Activated CD8-positive, alpha-beta T cell treated with anti-CD3 and anti-CD28 coated beads for 36 hours (primary cell): ENCODE measurements at regions of chr20 and their contacts with region 1.

Region 1: GRCh38 chr20:57709931-57710799 is at the start of gene PMEPA1:
- DNase-seq: peak; percentile 93
- ATAC-seq: peak; percentile 94
- H3K4me3 Mint-ChIP-seq: peak within 1 kb of the TSS; percentile 80
- H3K27ac Mint-ChIP-seq: peak within 1 kb of the TSS; percentile 78
- H3K4me1 Mint-ChIP-seq: peaks cover 16% of the 10 kb centered on the region
- H3K27me3 Mint-ChIP-seq: peaks cover 12% of the 10 kb centered on the region
- CTCF ChIP-seq: no peak
- total RNA-seq, gene PMEPA1: 1.7 to 2.0 TPM

Region 2: GRCh38 chr20:57698117-57698866 is 11.9 kb before region 1 on chr20:
- CTCF ChIA-PET with region 1: interaction called, 4 read pairs
- POLR2A ChIA-PET with region 1: interaction called, 24 read pairs
- intact Hi-C with region 1: no loop called
- DNase-seq: peak; percentile 90
- ATAC-seq: peak; percentile 99
- H3K4me3 Mint-ChIP-seq: peak overlapping the region; percentile 13
- H3K27ac Mint-ChIP-seq: peak overlapping the region; percentile 69
- H3K4me1 Mint-ChIP-seq: peaks cover 33% of the 10 kb centered on the region
- H3K27me3 Mint-ChIP-seq: no peaks in the 10 kb centered on the region
- CTCF ChIP-seq: no peak

Region 3: GRCh38 chr20:57727863-57728262 is 17.7 kb after region 1 on chr20:
- CTCF ChIA-PET with region 1: no interaction called
- POLR2A ChIA-PET with region 1: no interaction called
- intact Hi-C with region 1: no loop called
- DNase-seq: no peak
- ATAC-seq: no peak
- H3K4me3 Mint-ChIP-seq: no peak overlapping the region
- H3K27ac Mint-ChIP-seq: no peak overlapping the region
- H3K4me1 Mint-ChIP-seq: no peaks in the 10 kb centered on the region
- H3K27me3 Mint-ChIP-seq: peaks cover 7% of the 10 kb centered on the region
- CTCF ChIP-seq: no peak